Activated naive CD4-positive, alpha-beta T cell treated with anti-CD3 and anti-CD28 coated beads, Interleukin-2, amount 10 ng/mL, durations not matched to agents 7 days and 5 days (primary cell): ENCODE measurements at regions of chr6 and their contacts with region 1.

Region 1: DNA sequence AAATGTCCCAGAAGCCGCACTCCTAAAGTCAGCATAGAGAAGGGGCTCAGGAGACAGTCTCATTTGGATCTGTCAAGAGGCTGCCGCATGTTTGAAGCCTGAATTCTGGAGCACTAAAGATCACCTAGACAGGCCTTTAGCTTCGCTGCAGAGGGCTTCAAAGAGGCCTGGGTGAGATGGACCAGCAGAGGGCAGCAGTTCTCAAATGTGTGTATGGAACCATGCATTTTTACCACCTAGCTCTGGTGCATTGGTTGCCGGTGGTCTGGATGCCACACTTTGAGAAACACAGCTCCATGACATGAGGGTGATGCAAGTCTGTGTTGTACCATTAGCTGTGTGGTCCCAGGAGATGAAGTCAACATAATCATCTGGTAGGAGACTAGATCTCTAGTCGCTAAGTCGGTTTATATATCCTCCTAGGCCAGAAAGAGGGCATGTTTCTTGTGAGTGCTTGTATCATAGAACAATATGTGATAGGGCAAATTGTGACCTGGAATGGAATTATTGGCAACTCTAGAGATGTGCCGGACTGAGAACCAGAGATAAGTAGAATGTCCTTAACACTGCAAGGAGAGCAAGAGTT is 64.8 kb downstream of the KIAA0319 start:
- DNase-seq: peak; percentile 87
- H3K4me3 Mint-ChIP-seq: no peak overlapping the region
- H3K27ac Mint-ChIP-seq: no peak overlapping the region
- H3K4me1 Mint-ChIP-seq: peaks cover 2% of the 10 kb centered on the region
- H3K27me3 Mint-ChIP-seq: peaks cover 15% of the 10 kb centered on the region

Region 2: GRCh38 chr6:24451581-24452388 is 129.4 kb before region 1 on chr6:
- CTCF ChIA-PET with region 1: no interaction called
- DNase-seq: no peak
- H3K4me3 Mint-ChIP-seq: no peak overlapping the region
- H3K27ac Mint-ChIP-seq: no peak overlapping the region
- H3K4me1 Mint-ChIP-seq: no peaks in the 10 kb centered on the region
- H3K27me3 Mint-ChIP-seq: no peaks in the 10 kb centered on the region

Region 3: GRCh38 chr6:24547243-24547642 is 33.9 kb before region 1 on chr6:
- CTCF ChIA-PET with region 1: interaction called, 19 read pairs
- DNase-seq: peak; percentile 69
- H3K4me3 Mint-ChIP-seq: no peak overlapping the region
- H3K27ac Mint-ChIP-seq: no peak overlapping the region
- H3K4me1 Mint-ChIP-seq: peaks cover 8% of the 10 kb centered on the region
- H3K27me3 Mint-ChIP-seq: peaks cover 14% of the 10 kb centered on the region

Region 4: GRCh38 chr6:24564090-24564489 is 17.1 kb before region 1 on chr6:
- CTCF ChIA-PET with region 1: interaction called, 15 read pairs
- DNase-seq: no peak
- H3K4me3 Mint-ChIP-seq: no peak overlapping the region
- H3K27ac Mint-ChIP-seq: no peak overlapping the region
- H3K4me1 Mint-ChIP-seq: no peaks in the 10 kb centered on the region
- H3K27me3 Mint-ChIP-seq: peaks cover 4% of the 10 kb centered on the region

Region 5: GRCh38 chr6:24595512-24596217 is 14.5 kb after region 1 on chr6:
- CTCF ChIA-PET with region 1: interaction called, 22 read pairs
- DNase-seq: no peak
- H3K4me3 Mint-ChIP-seq: no peak overlapping the region
- H3K27ac Mint-ChIP-seq: no peak overlapping the region
- H3K4me1 Mint-ChIP-seq: no peaks in the 10 kb centered on the region
- H3K27me3 Mint-ChIP-seq: peaks cover 26% of the 10 kb centered on the region

Region 6: DNA sequence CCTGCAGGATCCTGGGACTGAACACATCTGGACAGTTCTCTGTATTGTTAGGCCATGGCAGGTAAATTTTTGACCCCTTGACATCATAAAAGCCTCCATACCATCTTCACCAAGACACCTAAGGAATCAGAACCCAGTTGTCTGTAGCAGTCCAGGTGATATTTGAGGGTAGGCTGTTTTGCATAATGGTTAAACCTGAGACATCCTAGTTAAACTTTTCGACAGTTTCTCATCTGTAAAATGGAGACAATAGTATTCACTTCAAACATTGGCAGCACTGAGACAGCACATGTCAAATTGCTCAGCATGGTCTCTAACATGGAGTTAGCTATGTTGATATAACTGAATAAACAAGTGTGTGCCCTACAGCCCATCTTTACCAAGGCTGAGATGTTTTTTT is 113.0 kb after region 1 on chr6:
- CTCF ChIA-PET with region 1: interaction called, 18 read pairs
- DNase-seq: no peak
- H3K4me3 Mint-ChIP-seq: no peak overlapping the region
- H3K27ac Mint-ChIP-seq: no peak overlapping the region
- H3K4me1 Mint-ChIP-seq: peaks cover 10% of the 10 kb centered on the region
- H3K27me3 Mint-ChIP-seq: no peaks in the 10 kb centered on the region

Region 7: DNA sequence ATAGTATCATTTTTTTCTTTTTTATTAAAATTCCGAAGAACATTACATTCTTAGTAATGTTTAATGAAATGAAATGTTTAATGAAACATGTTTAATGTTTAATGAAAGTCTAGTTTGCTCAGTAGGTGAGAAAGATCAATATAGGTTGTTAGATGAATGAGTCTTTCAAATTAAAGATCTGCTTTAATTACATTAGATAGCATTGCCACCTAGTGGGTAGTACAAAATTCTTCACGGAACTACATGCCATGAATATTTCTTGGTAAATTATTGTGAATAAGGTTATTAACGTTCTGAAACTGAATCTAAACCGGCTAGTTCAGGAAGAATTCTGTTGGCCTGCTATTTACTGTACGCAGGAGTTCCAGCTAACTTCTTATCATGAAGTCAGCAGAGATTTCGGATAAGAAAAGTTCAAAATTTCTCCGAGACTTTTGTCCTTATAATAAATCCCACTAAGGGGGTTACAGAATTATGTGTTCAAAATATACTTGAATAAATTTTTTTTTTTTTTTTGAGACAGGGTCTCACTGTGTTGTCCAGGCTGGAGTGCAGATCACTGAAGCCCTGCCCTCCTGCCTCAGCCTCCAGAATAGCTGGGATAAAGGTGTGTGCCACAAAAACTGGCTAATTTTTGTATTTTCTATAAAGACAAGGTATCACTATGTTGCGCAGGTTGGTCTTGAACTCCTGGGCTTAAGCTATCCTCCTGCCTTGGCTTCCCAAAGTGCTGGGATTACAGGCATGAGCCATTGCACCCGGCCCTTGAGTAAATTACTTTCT is 185.7 kb after region 1 on chr6:
- CTCF ChIA-PET with region 1: interaction called, 52 read pairs
- DNase-seq: no peak
- H3K4me3 Mint-ChIP-seq: no peak overlapping the region
- H3K27ac Mint-ChIP-seq: no peak overlapping the region
- H3K4me1 Mint-ChIP-seq: peaks cover 5% of the 10 kb centered on the region
- H3K27me3 Mint-ChIP-seq: no peaks in the 10 kb centered on the region